Gastrocnemius medialis (tissue), 4 donors: ENCODE measurements at regions of chr18 and their contacts with region 1.

Region 1: DNA sequence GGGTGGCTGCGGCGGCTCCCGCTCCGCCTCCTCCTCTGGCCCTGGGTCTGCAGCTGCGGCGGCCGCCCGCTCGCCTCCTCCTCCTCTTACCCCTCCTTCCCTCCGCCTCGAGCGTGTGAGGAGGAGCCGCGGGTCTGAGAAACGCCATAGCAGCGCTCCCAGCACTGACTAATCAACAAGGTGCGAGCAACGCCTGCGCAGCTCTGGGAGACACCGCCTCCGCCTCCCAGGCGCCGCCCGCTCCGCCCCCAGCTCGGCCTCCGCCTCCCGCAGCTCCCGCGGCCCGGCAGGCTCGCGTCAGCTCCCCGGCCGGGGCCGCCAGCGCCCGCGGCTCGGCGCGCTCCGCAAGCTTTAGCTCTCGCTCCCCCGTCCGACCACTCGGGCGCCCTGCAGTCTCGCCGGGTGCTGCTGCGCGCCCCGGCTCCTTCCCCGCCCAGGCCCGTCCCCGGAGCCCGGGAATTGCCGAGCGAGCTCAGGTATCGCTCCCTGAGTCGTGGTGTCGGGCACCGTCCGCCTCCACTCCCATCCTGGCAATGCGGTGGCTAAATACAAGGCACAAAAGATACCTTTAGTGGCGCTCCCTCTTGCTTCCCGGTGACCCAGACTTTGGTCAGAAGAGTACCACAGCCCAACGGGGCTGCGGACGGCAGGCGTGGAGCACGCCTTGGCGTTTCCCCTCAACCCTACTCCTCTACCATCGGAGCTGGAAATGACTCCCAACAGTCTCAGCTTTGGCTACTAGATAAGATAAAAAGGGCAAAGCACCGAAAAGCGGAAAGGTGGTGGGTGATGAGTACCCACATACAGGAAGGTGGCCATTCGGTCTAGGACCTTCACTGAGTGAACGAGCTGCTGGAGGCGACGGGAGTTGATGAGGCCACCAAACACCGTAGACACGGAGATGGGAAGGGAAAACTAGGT is at the start of gene GAREM1:
- DNase-seq: peak; percentile 95 to 96
- ATAC-seq: peak; percentile 89 to 90
- H3K4me3 ChIP-seq: peak within 1 kb of the TSS; percentile 76 to 85 (median 81)
- H3K27ac ChIP-seq: peak within 1 kb of the TSS; percentile 82 to 92 (median 88)
- H3K4me1 ChIP-seq: peaks cover 22 to 36% of the 10 kb centered on the region in 2 donors
- H3K27me3 ChIP-seq: no peaks in the 10 kb centered on the region
- CTCF ChIP-seq: peak; percentile 71 to 91 (median 83)
- POLR2A ChIP-seq: peak; percentile 95 to 97
- total RNA-seq, gene GAREM1: 13.4 to 21.9 (median 16.4) TPM

Region 2: DNA sequence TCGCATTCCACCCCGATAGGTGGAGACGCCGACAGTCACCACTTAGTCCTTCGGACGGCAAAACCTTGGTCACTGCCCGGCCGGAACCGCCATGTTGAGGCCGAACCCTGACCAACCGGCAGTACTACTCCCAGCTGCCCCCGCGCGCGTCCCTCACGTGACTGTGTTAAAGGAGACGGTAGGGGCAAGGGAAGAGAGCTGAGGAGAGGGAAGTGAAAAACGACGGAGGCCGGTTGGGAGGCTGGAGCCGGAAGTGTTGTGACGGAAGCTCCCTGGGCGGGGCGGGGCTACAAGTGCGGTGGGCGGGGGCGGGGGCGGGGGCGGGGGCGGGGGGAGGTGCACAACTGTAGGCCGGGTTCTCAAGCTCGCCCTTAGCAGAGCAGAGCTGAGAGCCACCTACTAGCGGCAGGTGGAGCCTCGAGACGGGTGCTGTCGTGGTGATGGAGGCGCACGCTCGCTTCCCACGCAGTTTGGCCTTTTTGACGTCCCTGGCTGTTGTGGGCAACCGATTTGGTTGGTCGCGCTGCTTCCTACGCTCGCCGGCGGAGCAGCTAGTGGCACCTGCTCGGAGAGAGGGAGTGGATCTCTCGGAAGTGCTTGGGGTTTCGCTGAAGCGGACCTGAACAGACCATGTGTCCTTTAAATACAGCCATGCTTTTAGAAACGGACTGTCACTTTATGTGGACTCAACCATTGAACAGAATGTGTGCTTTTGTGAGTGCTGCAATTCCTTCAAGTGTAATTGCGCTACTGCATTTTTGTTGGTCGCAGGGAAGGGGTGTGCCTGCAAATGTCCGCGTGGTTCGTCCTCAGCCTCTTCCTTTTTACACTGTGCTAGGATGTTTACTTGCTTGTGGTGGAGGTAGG is 527.7 kb before region 1 on chr18 and contains the start of gene TRAPPC8:
- in situ Hi-C with region 1: no loop called
- intact Hi-C with region 1: loop called (anchors 5 kb)
- DNase-seq: peak; percentile 98 to 99
- ATAC-seq: peak; percentile 95 to 98
- H3K4me3 ChIP-seq: peak within 1 kb of the TSS; percentile 79 to 98 (median 84)
- H3K27ac ChIP-seq: peak within 1 kb of the TSS; percentile 86 to 97 (median 96)
- H3K4me1 ChIP-seq: peaks cover 32 to 33% of the 10 kb centered on the region in 2 donors
- H3K27me3 ChIP-seq: no peaks in the 10 kb centered on the region
- CTCF ChIP-seq: peak in 3 of 5 experiments; percentile 11 to 32 (median 16)
- POLR2A ChIP-seq: peak; percentile 59 to 70
- total RNA-seq, gene TRAPPC8: 29.8 to 40.7 (median 39.1) TPM

Region 3: GRCh38 chr18:32158108-32158624 is 312.8 kb before region 1 on chr18:
- in situ Hi-C with region 1: loop called in 2 of 4 experiments (anchors 10 kb)
- intact Hi-C with region 1: loop called (anchors 2 kb)
- DNase-seq: peak; percentile 61 to 62
- ATAC-seq: peak; percentile 98
- H3K4me3 ChIP-seq: peak overlapping the region in 3 of 4 donors; percentile 34 to 42 (median 34)
- H3K27ac ChIP-seq: no peak overlapping the region
- H3K4me1 ChIP-seq: no peaks in the 10 kb centered on the region
- H3K27me3 ChIP-seq: no peaks in the 10 kb centered on the region
- CTCF ChIP-seq: peak; percentile 73 to 86 (median 81)
- POLR2A ChIP-seq: no peak

Region 4: GRCh38 chr18:32271672-32272208 is 199.2 kb before region 1 on chr18:
- in situ Hi-C with region 1: no loop called
- intact Hi-C with region 1: loop called (anchors 1 kb)
- DNase-seq: no peak
- ATAC-seq: peak; percentile 64 to 72
- H3K4me3 ChIP-seq: no peak overlapping the region
- H3K27ac ChIP-seq: no peak overlapping the region
- H3K4me1 ChIP-seq: no peaks in the 10 kb centered on the region
- H3K27me3 ChIP-seq: no peaks in the 10 kb centered on the region
- CTCF ChIP-seq: peak in 4 of 5 experiments; percentile 56 to 71 (median 64)
- POLR2A ChIP-seq: no peak

Region 5: GRCh38 chr18:32383050-32383819 is 87.7 kb before region 1 on chr18:
- in situ Hi-C with region 1: no loop called
- intact Hi-C with region 1: loop called (anchors 2 kb)
- DNase-seq: peak in 1 of 2 donors; percentile 2
- ATAC-seq: peak; percentile 77 to 86
- H3K4me3 ChIP-seq: no peak overlapping the region
- H3K27ac ChIP-seq: peak overlapping the region; percentile 48 to 62 (median 56)
- H3K4me1 ChIP-seq: peaks cover 40 to 43% of the 10 kb centered on the region in 2 donors
- H3K27me3 ChIP-seq: no peaks in the 10 kb centered on the region
- CTCF ChIP-seq: no peak
- POLR2A ChIP-seq: no peak